ENCODE measurements at regions of chr1 and their contacts with region 1.

Region 1: GRCh38 chr1:93021539-93022134 is 57.4 kb upstream of the MTF2 start:
- DNase-seq: no peak

Region 2: DNA sequence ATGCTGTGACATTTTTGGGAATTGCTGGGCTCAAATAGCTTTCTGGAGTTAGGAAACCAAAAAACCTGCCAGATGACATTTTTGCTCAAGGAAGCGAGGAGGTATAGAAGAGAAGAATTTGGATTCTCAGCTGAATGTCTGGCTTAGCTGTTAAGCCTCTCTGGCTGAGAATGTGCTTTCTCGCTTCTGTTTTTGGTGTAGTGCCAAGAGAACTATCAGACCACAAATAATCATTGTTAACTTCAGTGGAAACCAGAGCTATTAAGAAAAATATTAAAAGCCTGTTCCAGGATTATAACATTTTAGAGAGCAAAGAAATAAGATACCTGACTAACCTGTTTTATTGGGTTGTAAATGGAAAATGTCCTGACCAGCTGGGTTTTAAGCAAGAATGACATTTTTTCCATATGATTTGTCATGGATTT is 20.9 kb before region 1 on chr1:
- intact Hi-C with region 1: no loop called
- DNase-seq: no peak

Region 3: DNA sequence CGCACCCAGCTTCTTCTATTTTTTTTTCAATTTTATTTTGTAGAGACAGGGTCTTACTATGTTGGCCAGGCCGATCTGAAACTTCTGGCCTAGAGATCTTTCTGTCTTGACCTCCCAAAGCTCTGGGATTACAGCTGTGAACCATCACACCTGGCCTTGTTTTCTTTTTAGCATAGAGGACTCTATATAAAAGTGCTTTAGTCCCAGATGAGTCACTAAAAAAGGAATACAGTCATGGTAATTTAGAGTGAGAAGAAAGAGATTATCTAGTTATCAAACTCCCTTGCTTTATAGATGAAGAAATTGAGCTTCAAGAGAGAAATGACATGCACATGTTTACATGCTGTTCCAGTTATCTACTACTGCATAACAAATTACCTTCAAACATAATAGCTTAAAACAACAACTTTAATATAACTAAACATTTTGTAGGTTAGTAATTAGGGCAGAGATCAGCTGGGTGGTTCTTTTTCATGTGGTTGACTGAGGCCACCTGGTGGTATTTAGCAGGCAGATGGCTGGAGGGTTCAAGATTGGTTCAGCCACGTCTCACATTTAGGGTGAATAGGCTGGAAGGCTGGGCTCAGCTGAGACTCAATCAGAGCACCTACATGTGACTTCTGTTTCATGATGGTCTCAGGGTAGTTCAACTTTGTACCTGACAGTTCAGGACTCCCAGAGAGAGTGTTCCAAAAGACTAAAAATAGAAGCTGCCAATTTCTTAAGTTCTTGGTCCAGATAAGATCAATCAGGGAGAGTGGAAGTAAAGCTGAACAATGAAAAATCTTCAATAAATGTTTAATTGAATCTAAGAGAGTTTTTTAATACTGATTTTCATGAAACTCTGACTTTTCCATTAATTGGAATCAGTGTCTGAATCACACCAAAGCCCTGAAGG is 40.5 kb after region 1 on chr1:
- intact Hi-C with region 1: loop called (anchors 2 kb)
- DNase-seq: no peak

Measured in posterior cingulate gyrus (tissue), 11 donors.